ENCODE measurements at regions of chr9 and their contacts with region 1.

Region 1: GRCh38 chr9:89410641-89411350 is 87.1 kb downstream of the SEMA4D start:
- DNase-seq: peak; percentile 85
- ATAC-seq: peak; percentile 70
- H3K4me3 Mint-ChIP-seq: peak overlapping the region; percentile 40
- H3K27ac Mint-ChIP-seq: peak overlapping the region; percentile 95
- H3K4me1 Mint-ChIP-seq: peaks cover 95% of the 10 kb centered on the region
- H3K27me3 Mint-ChIP-seq: no peaks in the 10 kb centered on the region
- CTCF ChIP-seq: peak; percentile 20

Region 2: GRCh38 chr9:89400403-89401116 is 10.2 kb before region 1 on chr9:
- CTCF ChIA-PET with region 1: interaction called, 10 read pairs
- POLR2A ChIA-PET with region 1: interaction called, 3 read pairs
- intact Hi-C with region 1: no loop called
- DNase-seq: no peak
- ATAC-seq: no peak
- H3K4me3 Mint-ChIP-seq: no peak overlapping the region
- H3K27ac Mint-ChIP-seq: peak overlapping the region; percentile 71
- H3K4me1 Mint-ChIP-seq: peaks cover 41% of the 10 kb centered on the region
- H3K27me3 Mint-ChIP-seq: no peaks in the 10 kb centered on the region
- CTCF ChIP-seq: no peak

Region 3: DNA sequence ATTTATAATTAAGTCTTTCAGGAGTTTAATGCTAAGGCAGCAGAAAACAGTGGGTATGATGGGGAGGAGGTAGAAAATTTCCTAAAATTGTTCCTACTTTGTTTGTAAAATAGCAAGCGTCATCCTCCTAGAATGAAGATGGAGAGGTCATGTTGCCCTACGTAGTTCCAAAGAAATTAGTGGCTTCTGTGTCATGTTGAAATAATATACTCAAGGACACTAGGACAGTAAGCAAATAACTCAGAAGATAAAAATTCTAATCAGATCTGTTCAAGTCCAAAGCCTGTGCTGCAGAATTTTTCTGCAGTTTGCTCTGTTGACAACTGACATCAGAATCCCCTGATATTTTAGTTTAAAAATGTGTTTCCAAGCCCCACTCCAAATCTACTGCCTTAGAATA is 745.5 kb after region 1 on chr9:
- CTCF ChIA-PET with region 1: no interaction called
- POLR2A ChIA-PET with region 1: no interaction called
- intact Hi-C with region 1: no loop called
- DNase-seq: no peak
- ATAC-seq: no peak
- H3K4me3 Mint-ChIP-seq: no peak overlapping the region
- H3K27ac Mint-ChIP-seq: no peak overlapping the region
- H3K4me1 Mint-ChIP-seq: no peaks in the 10 kb centered on the region
- H3K27me3 Mint-ChIP-seq: peaks cover 3% of the 10 kb centered on the region
- CTCF ChIP-seq: no peak

Measured in activated CD8-positive, alpha-beta T cell treated with anti-CD3 and anti-CD28 coated beads for 36 hours (primary cell).